IMR-90 (cell line): ENCODE measurements at regions of chr2 and their contacts with region 1.

Region 1: DNA sequence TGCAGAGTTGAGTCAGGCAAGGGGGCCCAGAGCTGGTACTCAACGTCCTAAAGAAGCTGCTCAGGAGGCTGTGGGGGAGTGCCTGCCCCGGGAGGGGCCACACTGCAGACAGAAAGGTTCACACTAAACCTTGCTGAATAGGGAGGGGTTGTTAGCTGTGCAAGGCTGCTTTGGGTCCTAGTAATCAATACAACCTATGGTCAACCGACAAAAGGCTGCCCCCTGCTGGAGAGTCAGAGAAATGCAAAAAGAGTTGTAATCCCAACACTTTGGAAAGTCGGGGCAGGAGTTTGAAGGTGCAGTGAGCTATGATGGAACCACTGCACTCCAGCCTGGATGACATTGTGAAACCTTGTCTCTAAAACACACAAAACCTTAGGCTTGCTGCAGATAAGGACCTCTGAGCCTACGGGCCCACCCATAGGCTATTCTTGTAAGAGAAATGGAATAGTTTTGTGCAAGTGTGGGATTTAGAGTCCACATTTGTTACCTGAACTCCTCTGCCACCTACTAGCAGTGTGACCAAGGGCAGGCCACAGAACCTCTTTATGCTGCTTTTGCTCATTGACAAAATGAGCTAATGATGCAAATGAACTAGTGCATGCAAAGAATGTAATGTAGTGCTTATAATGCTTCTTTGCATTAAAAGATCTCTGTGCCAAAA is 81.5 kb downstream of the PRPF40A start:
- DNase-seq: peak; percentile 53
- ATAC-seq: peak; percentile 79
- H3K4me3 ChIP-seq: no peak overlapping the region
- H3K27ac ChIP-seq: no peak overlapping the region
- H3K4me1 ChIP-seq: no peaks in the 10 kb centered on the region
- H3K27me3 ChIP-seq: no peaks in the 10 kb centered on the region
- CTCF ChIP-seq: peak; percentile 75
- POLR2A ChIP-seq: no peak
- RAD21 ChIP-seq: peak; percentile 82

Region 2: DNA sequence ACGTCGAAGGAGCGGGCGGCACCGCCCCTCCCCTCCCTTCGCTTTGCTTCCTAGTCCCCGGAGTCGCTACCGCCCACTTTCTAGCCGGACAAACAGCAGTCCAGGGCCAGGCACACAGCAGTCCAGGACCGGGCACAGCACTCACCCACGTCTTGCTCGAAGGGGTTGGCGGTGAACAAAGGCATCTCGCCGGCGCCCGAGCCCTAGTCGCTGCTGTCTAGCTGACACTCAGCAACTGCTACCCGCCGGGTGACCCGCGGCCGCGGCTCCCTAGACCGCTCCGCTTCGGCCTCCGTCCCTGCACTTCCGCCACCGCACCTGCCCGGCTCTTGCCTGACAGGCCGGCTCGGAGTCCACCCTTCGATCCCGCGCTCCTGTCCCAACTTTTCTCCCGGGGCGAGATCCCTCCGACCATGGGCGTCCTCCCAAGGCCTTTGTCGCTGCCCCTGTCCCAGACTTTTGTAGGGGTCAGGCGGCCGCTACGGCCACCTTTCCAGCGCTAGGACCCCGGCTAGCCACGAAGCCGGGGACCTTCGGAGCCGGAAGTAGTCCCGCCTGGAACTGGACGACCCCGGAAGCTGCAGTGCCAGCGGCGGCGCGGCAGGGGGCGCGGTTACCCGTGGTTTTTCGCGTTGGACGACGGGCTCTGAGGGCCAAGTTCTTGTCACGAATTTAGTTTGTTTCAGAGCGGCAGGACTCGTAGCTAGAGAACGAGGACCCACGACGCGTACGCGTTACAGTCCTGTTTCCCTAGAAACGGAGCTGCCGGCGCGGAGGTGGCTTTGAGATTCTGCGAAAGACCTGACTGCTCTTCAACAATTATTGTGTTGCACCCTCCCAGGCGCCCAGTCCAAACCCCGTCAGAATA is 460.1 kb before region 1 on chr2 and contains the start of gene STAM2:
- CTCF ChIA-PET with region 1: interaction called, 14 read pairs
- POLR2A ChIA-PET with region 1: interaction called, 3 read pairs
- dilution Hi-C with region 1: loop called (anchors 25 kb)
- in situ Hi-C with region 1: no loop called
- intact Hi-C with region 1: loop called (anchors 1 kb)
- DNase-seq: peak; percentile 88
- ATAC-seq: peak; percentile 89
- H3K4me3 ChIP-seq: peak within 1 kb of the TSS; percentile 86
- H3K27ac ChIP-seq: peak within 1 kb of the TSS; percentile 97
- H3K4me1 ChIP-seq: peaks cover 2% of the 10 kb centered on the region
- H3K27me3 ChIP-seq: no peaks in the 10 kb centered on the region
- CTCF ChIP-seq: peak; percentile 99
- POLR2A ChIP-seq: peak; percentile 92
- RAD21 ChIP-seq: peak; percentile 87
- total RNA-seq, gene STAM2: 29.2 and 55.0 TPM in 2 replicates

Region 3: GRCh38 chr2:152676461-152676860 is 40.7 kb after region 1 on chr2:
- CTCF ChIA-PET with region 1: no interaction called
- POLR2A ChIA-PET with region 1: no interaction called
- dilution Hi-C with region 1: no loop called
- in situ Hi-C with region 1: no loop called
- intact Hi-C with region 1: no loop called
- DNase-seq: no peak
- ATAC-seq: no peak
- H3K4me3 ChIP-seq: no peak overlapping the region
- H3K27ac ChIP-seq: no peak overlapping the region
- H3K4me1 ChIP-seq: no peaks in the 10 kb centered on the region
- H3K27me3 ChIP-seq: no peaks in the 10 kb centered on the region
- CTCF ChIP-seq: no peak
- POLR2A ChIP-seq: no peak
- RAD21 ChIP-seq: no peak